Mucosa of descending colon (tissue), 3 donors: ENCODE measurements at regions of chr12 and their contacts with region 1.

Region 1: DNA sequence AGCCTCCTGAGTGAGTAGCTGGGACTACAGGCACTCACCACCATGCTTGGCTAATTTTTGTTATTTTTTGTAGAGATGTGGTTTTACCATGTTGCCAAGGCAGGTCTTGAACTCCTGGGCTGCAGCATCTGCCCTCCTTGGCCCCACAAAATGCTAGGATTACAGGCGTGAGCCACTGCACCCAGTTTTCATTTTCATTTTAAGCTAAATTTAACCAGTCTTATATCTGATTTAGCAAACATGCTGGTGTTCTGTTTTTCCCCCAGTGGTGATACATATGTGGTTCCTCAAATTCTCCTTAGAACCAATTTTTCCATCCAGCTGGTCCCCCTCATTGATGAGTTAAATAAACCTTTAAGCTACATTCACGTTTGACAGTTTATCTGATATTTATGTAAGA is 43.8 kb upstream of the BICD1 start:
- DNase-seq: no peak
- ATAC-seq: no peak
- H3K4me3 ChIP-seq: no peak overlapping the region
- H3K4me1 ChIP-seq: no peaks in the 10 kb centered on the region
- CTCF ChIP-seq: no peak

Region 2: DNA sequence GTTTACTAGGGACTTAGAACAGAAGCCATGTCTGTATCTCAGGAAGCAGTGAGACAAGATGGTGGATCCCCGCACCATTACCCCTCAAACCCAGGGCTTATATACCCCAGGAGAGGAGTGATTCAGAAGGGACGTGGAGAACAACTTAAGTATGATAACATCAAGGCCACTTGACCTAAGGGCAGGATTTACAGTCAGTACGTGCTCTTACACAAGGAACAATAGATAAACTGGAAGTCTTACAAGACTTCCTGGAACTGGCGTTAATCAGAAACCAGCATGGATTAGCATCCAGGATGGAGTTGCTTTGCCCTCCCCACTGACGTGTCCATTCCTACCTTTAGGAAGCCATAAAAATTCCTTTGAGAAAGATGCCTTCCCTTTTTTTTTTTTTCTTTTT is 412.0 kb before region 1 on chr12:
- intact Hi-C with region 1: loop called in 1 of 2 experiments (anchors 5 kb)
- DNase-seq: peak in 1 of 3 donors; percentile 52
- ATAC-seq: peak; percentile 88
- H3K4me3 ChIP-seq: no peak overlapping the region
- H3K4me1 ChIP-seq: peaks cover 8% of the 10 kb centered on the region
- CTCF ChIP-seq: no peak

Region 3: GRCh38 chr12:31959161-31959700 is 103.7 kb before region 1 on chr12 and contains the start of gene RESF1:
- intact Hi-C with region 1: no loop called
- DNase-seq: peak; percentile 93 to 96 (median 94)
- ATAC-seq: peak; percentile 98
- H3K4me3 ChIP-seq: peak within 1 kb of the TSS; percentile 35
- H3K4me1 ChIP-seq: peaks cover 23% of the 10 kb centered on the region
- CTCF ChIP-seq: no peak
- total RNA-seq, gene RESF1: 41.5 to 47.3 (median 46.8) TPM

Region 4: GRCh38 chr12:32302218-32303173 is 239.6 kb after region 1 on chr12:
- intact Hi-C with region 1: loop called in 1 of 2 experiments (anchors 10 kb)
- DNase-seq: peak in 2 of 3 donors; percentile 33 to 51
- ATAC-seq: peak; percentile 82
- H3K4me3 ChIP-seq: no peak overlapping the region
- H3K4me1 ChIP-seq: no peaks in the 10 kb centered on the region
- CTCF ChIP-seq: no peak

Region 5: GRCh38 chr12:32312049-32312670 is 249.3 kb after region 1 on chr12:
- intact Hi-C with region 1: loop called (anchors 10 kb)
- DNase-seq: peak in 1 of 3 donors; percentile 7
- ATAC-seq: peak; percentile 85
- H3K4me3 ChIP-seq: no peak overlapping the region
- H3K4me1 ChIP-seq: no peaks in the 10 kb centered on the region
- CTCF ChIP-seq: no peak